Activated naive CD4-positive, alpha-beta T cell treated with anti-CD3 and anti-CD28 coated beads for 36 hours (primary cell): ENCODE measurements at regions of chr14 and their contacts with region 1.

Region 1: DNA sequence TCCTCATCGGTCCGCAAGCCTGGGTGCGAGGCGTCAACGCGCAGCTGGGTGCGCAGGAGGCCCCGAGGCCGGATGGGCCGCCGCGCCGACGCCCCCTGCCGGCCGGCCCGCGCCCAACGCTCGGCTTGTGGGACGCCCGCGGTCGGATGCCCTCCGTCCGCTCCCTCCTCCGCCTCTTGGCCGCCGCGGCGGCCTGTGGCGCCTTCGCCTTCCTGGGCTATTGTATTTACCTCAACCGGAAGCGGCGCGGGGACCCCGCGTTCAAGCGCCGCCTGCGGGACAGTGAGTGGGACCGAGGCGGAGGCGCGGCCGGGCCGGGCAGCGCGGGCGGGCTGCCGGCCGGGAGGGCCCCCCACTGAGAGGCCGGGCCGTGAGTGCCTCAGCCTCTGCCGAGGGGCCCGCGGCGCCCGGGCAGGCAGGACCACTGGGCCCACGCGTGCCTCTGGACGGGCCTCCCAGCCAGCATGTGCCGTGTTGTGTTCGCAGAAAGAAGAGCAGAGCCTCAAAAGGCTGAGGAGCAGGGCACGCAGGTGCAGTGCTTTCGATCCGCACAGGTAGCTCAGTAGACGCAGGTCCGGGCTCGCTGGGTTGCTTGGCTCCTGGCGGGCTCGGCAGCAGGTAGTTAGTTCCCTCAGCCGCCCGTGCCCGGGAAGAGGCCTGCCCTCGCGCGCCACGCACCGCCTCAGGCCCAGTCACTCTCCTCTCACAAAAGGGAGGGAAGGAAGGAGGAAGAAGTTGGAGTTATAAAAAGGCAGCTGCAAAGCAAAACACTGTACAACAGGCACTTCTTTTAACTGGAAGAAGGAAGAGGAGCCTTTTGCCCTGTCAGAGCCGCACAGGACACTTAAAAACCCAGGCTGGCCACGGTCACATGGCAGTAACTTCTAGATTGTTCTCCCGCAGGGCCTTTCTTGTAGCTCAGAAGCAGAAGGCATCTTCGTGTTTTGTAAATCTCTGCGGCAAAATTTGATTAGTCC is at the start of gene TOMM20L:
- DNase-seq: peak; percentile 71
- H3K4me3 Mint-ChIP-seq: peak within 1 kb of the TSS; percentile 67
- H3K27ac Mint-ChIP-seq: no peak within 1 kb of the TSS
- H3K4me1 Mint-ChIP-seq: peaks cover 8% of the 10 kb centered on the region
- H3K27me3 Mint-ChIP-seq: no peaks in the 10 kb centered on the region
- total RNA-seq, gene TOMM20L: not detected

Region 2: GRCh38 chr14:58376791-58377190 is 19.3 kb before region 1 on chr14:
- CTCF ChIA-PET with region 1: interaction called, 11 read pairs
- intact Hi-C with region 1: no loop called
- DNase-seq: no peak
- H3K4me3 Mint-ChIP-seq: no peak overlapping the region
- H3K27ac Mint-ChIP-seq: no peak overlapping the region
- H3K4me1 Mint-ChIP-seq: no peaks in the 10 kb centered on the region
- H3K27me3 Mint-ChIP-seq: no peaks in the 10 kb centered on the region